Mammary epithelial cell (primary cell): ENCODE measurements at regions of chr2 and their contacts with region 1.

Region 1: GRCh38 chr2:85888684-85889626 is at the start of gene ST3GAL5:
- DNase-seq: peak; percentile 72
- H3K4me3 ChIP-seq: peak within 1 kb of the TSS; percentile 66 to 88 (median 70)
- H3K27ac ChIP-seq: peak within 1 kb of the TSS; percentile 56
- H3K4me1 ChIP-seq: peaks cover 55% of the 10 kb centered on the region
- H3K27me3 ChIP-seq: no peaks in the 10 kb centered on the region
- CTCF ChIP-seq: peak; percentile 68 to 69
- total RNA-seq, gene ST3GAL5: 12.0 to 25.1 TPM

Region 2: DNA sequence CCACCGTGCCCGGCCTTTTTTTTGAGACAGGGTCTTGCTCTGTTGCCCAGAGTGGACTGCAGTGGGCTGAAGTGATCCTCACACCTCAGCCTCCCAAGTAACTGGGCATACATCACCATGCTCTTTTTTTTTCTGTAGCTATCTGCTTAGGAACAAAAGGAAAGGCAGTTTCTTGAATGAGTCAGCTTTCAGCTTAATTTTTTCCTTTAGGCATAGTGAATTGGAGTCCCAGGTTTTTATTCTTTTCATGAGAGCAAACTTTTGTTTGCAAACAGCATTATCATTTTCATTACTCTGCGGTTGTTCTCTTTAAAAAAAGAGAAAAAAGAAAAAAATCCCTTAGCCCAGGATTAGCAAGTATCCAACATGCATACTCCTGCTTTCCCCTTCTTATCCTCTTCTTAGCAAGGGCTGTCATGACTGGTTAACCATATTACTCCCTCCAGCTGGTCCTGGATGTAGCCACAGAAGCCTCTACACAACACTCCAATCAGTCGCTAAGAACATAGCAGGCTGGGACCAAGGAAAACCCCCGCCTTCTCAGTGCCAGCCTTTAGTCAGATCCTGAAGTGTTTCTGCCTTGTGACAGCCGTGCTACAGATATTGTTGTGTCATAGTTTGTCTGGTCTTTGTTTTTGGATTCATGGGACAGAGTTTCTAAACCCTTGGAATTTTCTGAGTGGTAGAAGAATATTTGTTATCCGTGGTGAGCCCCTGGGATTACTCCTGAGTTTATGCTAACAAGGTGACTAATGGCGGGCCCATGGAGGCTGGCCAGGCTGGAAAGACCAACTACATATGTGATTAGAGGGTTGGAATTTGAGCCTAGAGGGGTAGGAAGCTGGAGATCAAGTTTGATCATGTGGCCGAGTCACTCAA is 23.1 kb after region 1 on chr2:
- CTCF ChIA-PET with region 1: interaction called, 6 read pairs
- dilution Hi-C with region 1: no loop called
- in situ Hi-C with region 1: no loop called
- intact Hi-C with region 1: loop called (anchors 1 kb)
- DNase-seq: peak; percentile 94
- H3K4me3 ChIP-seq: no peak overlapping the region
- H3K27ac ChIP-seq: peak overlapping the region; percentile 94
- H3K4me1 ChIP-seq: peaks cover 33% of the 10 kb centered on the region
- H3K27me3 ChIP-seq: no peaks in the 10 kb centered on the region
- CTCF ChIP-seq: no peak

Region 3: GRCh38 chr2:86011449-86011941 is 122.5 kb after region 1 on chr2:
- CTCF ChIA-PET with region 1: no interaction called
- dilution Hi-C with region 1: no loop called
- in situ Hi-C with region 1: loop called in 1 of 2 experiments (anchors 10 kb)
- intact Hi-C with region 1: loop called (anchors 5 kb)
- DNase-seq: no peak
- H3K4me3 ChIP-seq: no peak overlapping the region
- H3K27ac ChIP-seq: no peak overlapping the region
- H3K4me1 ChIP-seq: no peaks in the 10 kb centered on the region
- H3K27me3 ChIP-seq: no peaks in the 10 kb centered on the region
- CTCF ChIP-seq: no peak

Region 4: GRCh38 chr2:86035883-86036668 is 147.1 kb after region 1 on chr2:
- CTCF ChIA-PET with region 1: interaction called, 7 read pairs
- dilution Hi-C with region 1: no loop called
- in situ Hi-C with region 1: no loop called
- intact Hi-C with region 1: loop called (anchors 1 kb)
- DNase-seq: peak; percentile 20
- H3K4me3 ChIP-seq: no peak overlapping the region
- H3K27ac ChIP-seq: no peak overlapping the region
- H3K4me1 ChIP-seq: peaks cover 27% of the 10 kb centered on the region
- H3K27me3 ChIP-seq: no peaks in the 10 kb centered on the region
- CTCF ChIP-seq: peak; percentile 9 to 21

Region 5: DNA sequence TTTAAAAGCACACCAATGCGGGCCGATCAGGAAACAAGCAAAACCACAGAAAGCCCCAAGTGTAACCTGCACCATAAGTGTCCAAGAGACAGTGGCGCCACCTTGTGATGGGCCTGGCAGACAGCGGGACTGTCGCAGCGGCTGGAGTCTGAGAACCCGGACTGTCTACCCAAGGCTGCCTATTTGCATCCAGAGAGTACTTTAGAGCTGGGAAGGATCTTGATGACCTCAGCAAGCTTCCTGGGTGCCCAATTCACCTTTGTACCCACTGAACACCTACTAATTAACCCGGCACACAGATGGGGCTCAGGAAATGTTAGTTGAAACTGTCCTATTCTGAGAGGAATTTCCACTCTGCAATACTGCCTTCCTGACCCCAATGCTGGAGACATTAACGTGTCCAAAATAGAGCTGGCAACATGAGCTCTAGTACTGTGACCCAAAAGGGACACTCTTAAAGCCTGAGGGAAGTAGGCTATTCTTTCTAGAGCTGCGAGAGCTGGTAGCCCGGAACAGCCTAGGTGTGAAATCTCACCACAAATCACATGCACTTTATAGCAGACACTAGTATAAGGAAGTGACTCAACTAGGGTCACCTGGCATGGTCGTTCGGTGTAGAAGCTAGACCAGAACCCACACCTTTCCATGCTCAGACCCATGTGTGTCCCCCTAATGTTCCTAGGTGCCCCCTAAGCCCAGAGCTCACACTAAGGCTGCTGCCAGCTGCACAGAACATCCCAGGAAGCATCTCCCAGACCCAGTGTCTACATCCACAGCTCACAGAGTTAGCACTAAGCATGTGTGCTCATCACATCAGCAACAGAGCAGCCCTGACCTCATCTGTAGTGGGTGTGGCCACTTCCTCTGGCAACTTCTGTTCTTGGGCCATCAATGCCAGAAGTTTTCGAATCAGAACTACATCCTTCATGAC is 191.3 kb after region 1 on chr2:
- CTCF ChIA-PET with region 1: interaction called, 4 read pairs
- dilution Hi-C with region 1: no loop called
- in situ Hi-C with region 1: no loop called
- intact Hi-C with region 1: loop called (anchors 1 kb)
- DNase-seq: peak; percentile 30
- H3K4me3 ChIP-seq: no peak overlapping the region
- H3K27ac ChIP-seq: no peak overlapping the region
- H3K4me1 ChIP-seq: no peaks in the 10 kb centered on the region
- H3K27me3 ChIP-seq: no peaks in the 10 kb centered on the region
- CTCF ChIP-seq: peak; percentile 70 to 89